ENCODE measurements at regions of chr4 and their contacts with region 1.

Region 1: GRCh38 chr4:77917075-77917474 is 54.4 kb downstream of the MRPL1 start:
- DNase-seq: no peak
- H3K4me3 ChIP-seq: peak overlapping the region; percentile 42
- H3K27ac ChIP-seq: peak overlapping the region; percentile 62
- H3K4me1 ChIP-seq: peaks cover 59% of the 10 kb centered on the region
- CTCF ChIP-seq: no peak

Region 2: DNA sequence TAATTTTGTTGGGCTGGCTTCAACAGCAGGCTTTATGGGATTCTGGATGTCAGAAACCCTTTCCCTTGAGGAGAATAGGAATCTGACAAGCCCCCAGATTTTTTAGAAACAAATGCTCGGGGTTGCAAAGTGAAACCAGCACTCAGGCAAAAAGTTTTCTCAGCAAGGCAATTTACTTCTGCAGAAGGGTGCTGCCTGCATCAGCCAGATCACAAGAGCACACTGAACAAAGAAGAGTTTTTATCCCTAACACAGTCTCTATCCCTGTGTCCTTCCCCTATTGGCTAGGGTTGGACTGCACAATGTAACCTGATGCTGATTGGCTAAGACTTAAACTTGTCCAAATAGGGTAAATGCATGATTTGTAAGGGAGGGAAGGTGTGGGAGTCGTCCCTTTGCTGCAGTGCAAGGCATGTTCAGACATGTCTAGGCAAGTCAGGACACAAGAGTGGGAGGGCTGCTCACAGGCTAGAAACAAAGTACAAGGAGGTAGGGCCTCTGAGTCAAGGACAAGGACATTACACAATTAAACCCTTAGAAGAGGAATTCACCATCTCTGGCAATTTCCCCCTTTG is 584.3 kb before region 1 on chr4:
- CTCF ChIA-PET with region 1: no interaction called
- POLR2A ChIA-PET with region 1: no interaction called
- intact Hi-C with region 1: no loop called
- DNase-seq: no peak
- H3K4me3 ChIP-seq: no peak overlapping the region
- H3K27ac ChIP-seq: no peak overlapping the region
- H3K4me1 ChIP-seq: no peaks in the 10 kb centered on the region
- CTCF ChIP-seq: no peak

Region 3: DNA sequence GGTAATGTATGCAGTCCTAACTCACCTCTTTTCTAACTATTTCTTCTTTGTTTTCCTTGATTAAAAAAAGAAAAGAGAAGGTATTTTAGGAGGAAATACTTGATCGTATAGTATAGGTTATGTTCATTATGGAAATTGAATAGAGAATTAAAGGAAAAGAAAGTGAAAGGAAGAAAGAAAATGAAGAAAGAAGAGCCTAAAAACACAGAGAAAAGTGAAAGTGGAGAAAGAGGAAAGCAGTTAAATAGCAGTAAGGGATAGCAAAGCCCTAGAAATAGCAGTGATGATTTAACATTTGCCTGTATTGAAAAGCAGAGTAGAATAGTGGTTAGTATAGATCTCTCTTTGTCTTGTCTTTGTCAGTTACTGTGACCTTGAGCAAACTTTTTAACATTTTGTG is 17.5 kb before region 1 on chr4:
- CTCF ChIA-PET with region 1: no interaction called
- POLR2A ChIA-PET with region 1: interaction called, 33 read pairs
- intact Hi-C with region 1: no loop called
- DNase-seq: no peak
- H3K4me3 ChIP-seq: no peak overlapping the region
- H3K27ac ChIP-seq: peak overlapping the region; percentile 6
- H3K4me1 ChIP-seq: peaks cover 30% of the 10 kb centered on the region
- CTCF ChIP-seq: no peak

Region 4: DNA sequence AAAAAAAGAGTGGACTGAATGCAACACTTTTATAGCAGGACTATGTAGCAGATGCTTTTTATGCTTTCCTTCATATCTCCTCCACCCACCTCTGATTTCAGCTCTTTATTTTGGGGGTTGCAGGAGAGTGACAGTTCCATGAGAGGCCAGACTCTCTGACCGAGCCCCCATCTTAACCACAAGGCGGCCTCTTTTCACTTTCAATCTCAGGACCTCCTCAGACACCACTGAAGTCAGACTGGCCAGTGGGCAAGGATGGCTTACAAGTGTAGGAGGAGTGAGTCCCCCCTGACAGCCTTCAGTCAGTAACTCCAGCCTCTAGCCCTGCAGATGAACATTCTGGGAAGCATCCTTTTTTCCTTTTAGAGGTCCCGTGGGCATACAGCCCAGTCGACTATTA is 280.9 kb after region 1 on chr4:
- CTCF ChIA-PET with region 1: no interaction called
- POLR2A ChIA-PET with region 1: no interaction called
- intact Hi-C with region 1: no loop called
- DNase-seq: no peak
- H3K4me3 ChIP-seq: no peak overlapping the region
- H3K27ac ChIP-seq: no peak overlapping the region
- H3K4me1 ChIP-seq: no peaks in the 10 kb centered on the region
- CTCF ChIP-seq: no peak

Measured in OCI-LY7 (cell line).